ENCODE measurements at regions of chr16 and their contacts with region 1.

Region 1: DNA sequence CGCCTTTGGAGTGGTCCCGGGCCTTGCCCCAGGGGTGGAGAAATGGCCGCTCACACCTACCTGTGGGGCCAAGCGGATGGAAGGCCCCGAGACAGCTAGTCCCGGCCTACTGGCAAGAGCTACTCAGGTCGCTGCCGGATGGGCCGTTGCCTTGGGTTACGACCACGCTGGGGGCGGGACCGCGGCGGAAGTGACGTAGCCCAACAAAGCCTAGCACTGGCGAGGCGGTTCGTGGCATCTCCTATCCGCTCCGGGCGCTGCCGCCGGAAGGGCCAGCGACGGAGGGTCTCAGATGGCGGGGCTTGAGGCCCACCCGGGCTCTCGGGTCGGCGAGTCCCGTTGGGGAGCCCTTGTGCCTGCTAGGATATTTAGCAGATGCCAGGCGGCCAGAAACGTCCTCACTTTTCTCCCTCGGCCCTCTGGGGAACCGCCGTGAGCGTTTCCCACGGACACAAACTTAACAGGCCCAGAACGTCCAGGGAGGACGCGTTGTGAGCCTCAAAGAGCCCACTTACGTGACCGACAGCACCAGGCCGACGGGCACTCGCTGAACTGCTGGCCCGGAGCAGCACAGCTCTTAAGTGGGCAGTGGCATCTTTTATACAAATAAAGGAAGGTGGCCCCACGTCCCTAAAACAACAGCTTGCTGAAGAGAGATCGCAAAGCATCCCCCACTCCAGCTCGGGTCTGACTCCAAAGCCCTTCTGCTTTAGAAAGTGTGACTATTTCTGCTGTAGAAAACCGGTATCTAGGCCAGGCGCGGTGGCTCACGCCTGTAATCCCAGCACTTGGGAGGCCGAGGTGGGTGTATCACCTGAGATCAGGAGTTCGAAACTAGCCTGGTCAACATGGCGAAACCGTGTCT is at the start of gene C16orf46:
- DNase-seq: peak; percentile 93 to 99 (median 97)
- ATAC-seq: peak; percentile 85
- H3K4me3 ChIP-seq: peak within 1 kb of the TSS; percentile 96
- H3K4me3 Mint-ChIP-seq: peak within 1 kb of the TSS in 2 of 10 donors; percentile 39 to 57
- H3K27ac ChIP-seq: peak within 1 kb of the TSS; percentile 89
- H3K27ac Mint-ChIP-seq: peak within 1 kb of the TSS in 2 of 9 donors; percentile 89 to 91
- H3K4me1 ChIP-seq: peaks cover 10 to 11% of the 10 kb centered on the region in 2 donors
- H3K4me1 Mint-ChIP-seq: peaks cover 0 to 4% (median 0%) of the 10 kb centered on the region in 7 donors
- H3K27me3 ChIP-seq: no peaks in the 10 kb centered on the region
- H3K27me3 Mint-ChIP-seq: peaks cover 0 to 10% (median 0%) of the 10 kb centered on the region in 5 donors
- total RNA-seq, gene C16orf46: 0.24 to 2.1 (median 0.70) TPM in 4 of 5 experiments, not detected in the other

Region 2: GRCh38 chr16:80540516-80541272 is 536.6 kb before region 1 on chr16 and contains the start of gene DYNLRB2:
- CTCF ChIA-PET with region 1: no interaction called
- POLR2A ChIA-PET with region 1: no interaction called
- intact Hi-C with region 1: loop called (anchors 2 to 5 kb)
- DNase-seq: peak; percentile 82 to 94 (median 93)
- ATAC-seq: peak; percentile 94
- H3K4me3 ChIP-seq: peak within 1 kb of the TSS; percentile 94
- H3K4me3 Mint-ChIP-seq: peak within 1 kb of the TSS; percentile 93 to 98 (median 96)
- H3K27ac ChIP-seq: peak within 1 kb of the TSS; percentile 77
- H3K27ac Mint-ChIP-seq: peak within 1 kb of the TSS; percentile 96 to 99 (median 97)
- H3K4me1 ChIP-seq: peaks cover 6 to 13% of the 10 kb centered on the region in 2 donors
- H3K4me1 Mint-ChIP-seq: peaks cover 16 to 33% (median 19%) of the 10 kb centered on the region in 7 donors
- H3K27me3 ChIP-seq: no peaks in the 10 kb centered on the region
- H3K27me3 Mint-ChIP-seq: peaks cover 0 to 9% (median 3%) of the 10 kb centered on the region in 5 donors
- total RNA-seq, gene DYNLRB2: 0.92 to 1.2 TPM in 2 of 5 experiments, not detected in the others

Region 3: DNA sequence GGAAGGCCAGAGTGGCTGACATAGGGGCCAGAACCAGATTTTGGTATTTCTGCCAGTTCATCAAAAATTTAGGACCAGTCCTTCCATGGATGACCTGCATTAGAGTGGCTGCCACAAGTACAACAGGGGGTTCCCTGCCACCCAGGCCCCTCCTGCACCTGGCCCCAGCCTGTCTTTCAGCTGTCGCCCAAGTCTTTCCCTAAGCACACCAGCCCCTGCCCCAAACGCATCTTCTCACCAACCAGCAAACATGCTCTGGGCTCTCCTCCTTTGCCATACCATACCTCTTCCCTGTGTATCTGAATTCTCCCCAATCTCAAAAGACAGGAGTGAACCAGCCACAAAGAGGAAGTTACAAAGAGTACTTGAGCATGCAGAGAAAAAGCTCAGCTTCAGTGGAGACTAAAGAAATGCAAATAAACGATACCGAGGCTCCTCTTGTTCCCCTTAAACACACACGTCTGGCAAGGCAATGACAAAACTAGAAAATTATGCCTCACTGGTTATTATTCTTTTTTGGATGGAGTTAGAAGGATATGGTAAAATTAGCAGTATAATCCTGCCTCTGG is 405.9 kb before region 1 on chr16:
- CTCF ChIA-PET with region 1: no interaction called
- POLR2A ChIA-PET with region 1: no interaction called
- intact Hi-C with region 1: no loop called
- DNase-seq: no peak
- ATAC-seq: no peak
- H3K4me3 ChIP-seq: no peak overlapping the region
- H3K4me3 Mint-ChIP-seq: no peak overlapping the region
- H3K27ac ChIP-seq: no peak overlapping the region
- H3K27ac Mint-ChIP-seq: peak overlapping the region in 2 of 9 donors; percentile 36 to 38
- H3K4me1 ChIP-seq: no peaks in the 10 kb centered on the region
- H3K4me1 Mint-ChIP-seq: peaks cover 5 to 26% (median 11%) of the 10 kb centered on the region in 7 donors
- H3K27me3 ChIP-seq: no peaks in the 10 kb centered on the region
- H3K27me3 Mint-ChIP-seq: peaks cover 0 to 3% (median 0%) of the 10 kb centered on the region in 5 donors

Region 4: GRCh38 chr16:80997139-80997798 is 80.0 kb before region 1 on chr16:
- CTCF ChIA-PET with region 1: interaction called, 5 read pairs
- POLR2A ChIA-PET with region 1: interaction called, 3 read pairs
- intact Hi-C with region 1: loop called in 1 of 2 experiments (anchors 2 kb)
- DNase-seq: peak in 4 of 9 donors; percentile 21 to 33 (median 27)
- ATAC-seq: peak; percentile 49
- H3K4me3 ChIP-seq: peak overlapping the region; percentile 58
- H3K4me3 Mint-ChIP-seq: peak overlapping the region; percentile 79 to 97 (median 94)
- H3K27ac ChIP-seq: peak overlapping the region; percentile 71
- H3K27ac Mint-ChIP-seq: peak overlapping the region; percentile 92 to 96 (median 95)
- H3K4me1 ChIP-seq: peaks cover 4% of the 10 kb centered on the region in 2 donors
- H3K4me1 Mint-ChIP-seq: peaks cover 24 to 79% (median 67%) of the 10 kb centered on the region in 7 donors
- H3K27me3 ChIP-seq: no peaks in the 10 kb centered on the region
- H3K27me3 Mint-ChIP-seq: no peaks in the 10 kb centered on the region

Region 5: GRCh38 chr16:81095953-81096717 is 18.8 kb after region 1 on chr16 and contains the start of gene GCSH:
- CTCF ChIA-PET with region 1: interaction called, 3 read pairs
- POLR2A ChIA-PET with region 1: interaction called, 9 read pairs
- intact Hi-C with region 1: loop called (anchors 1 kb)
- DNase-seq: peak; percentile 94 to 99 (median 98)
- ATAC-seq: peak; percentile 98
- H3K4me3 ChIP-seq: peak within 1 kb of the TSS; percentile 71
- H3K4me3 Mint-ChIP-seq: peak within 1 kb of the TSS; percentile 72 to 93 (median 82)
- H3K27ac ChIP-seq: peak within 1 kb of the TSS; percentile 67
- H3K27ac Mint-ChIP-seq: peak within 1 kb of the TSS; percentile 45 to 87 (median 71)
- H3K4me1 ChIP-seq: peaks cover 0 to 6% of the 10 kb centered on the region in 2 donors
- H3K4me1 Mint-ChIP-seq: peaks cover 3 to 19% (median 9%) of the 10 kb centered on the region in 7 donors
- H3K27me3 ChIP-seq: no peaks in the 10 kb centered on the region
- H3K27me3 Mint-ChIP-seq: no peaks in the 10 kb centered on the region
- total RNA-seq, gene GCSH: 1.5 to 7.5 (median 4.9) TPM

Region 6: DNA sequence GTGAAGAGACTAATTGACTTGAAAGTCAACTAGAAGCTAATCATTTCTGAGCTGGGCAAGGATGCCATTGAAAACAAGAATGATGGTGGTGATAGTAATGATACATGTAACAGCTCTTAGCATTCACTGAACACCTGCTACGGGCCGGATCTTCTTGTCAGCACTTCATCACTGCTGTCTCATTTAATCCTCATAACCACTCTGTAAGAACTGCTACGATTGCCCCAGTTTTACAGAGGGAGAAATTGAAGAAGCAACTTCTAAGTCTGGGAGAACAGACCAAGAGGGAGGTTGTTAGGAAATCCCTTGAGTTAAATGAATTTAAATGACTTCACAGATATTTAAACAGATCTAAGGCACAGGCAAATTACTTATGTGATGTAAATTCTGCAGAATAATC is 230.5 kb after region 1 on chr16:
- CTCF ChIA-PET with region 1: no interaction called
- POLR2A ChIA-PET with region 1: no interaction called
- intact Hi-C with region 1: no loop called
- DNase-seq: no peak
- ATAC-seq: no peak
- H3K4me3 ChIP-seq: no peak overlapping the region
- H3K4me3 Mint-ChIP-seq: no peak overlapping the region
- H3K27ac ChIP-seq: no peak overlapping the region
- H3K27ac Mint-ChIP-seq: peak overlapping the region in 2 of 9 donors; percentile 12 to 16
- H3K4me1 ChIP-seq: no peaks in the 10 kb centered on the region
- H3K4me1 Mint-ChIP-seq: peaks cover 7 to 29% (median 23%) of the 10 kb centered on the region in 7 donors
- H3K27me3 ChIP-seq: no peaks in the 10 kb centered on the region
- H3K27me3 Mint-ChIP-seq: peaks cover 0 to 3% (median 0%) of the 10 kb centered on the region in 5 donors

Region 7: GRCh38 chr16:81737885-81738786 is 660.8 kb after region 1 on chr16:
- CTCF ChIA-PET with region 1: no interaction called
- POLR2A ChIA-PET with region 1: no interaction called
- intact Hi-C with region 1: loop called in 1 of 2 experiments (anchors 1 kb)
- DNase-seq: peak; percentile 69 to 88 (median 83)
- ATAC-seq: peak; percentile 95
- H3K4me3 ChIP-seq: peak overlapping the region; percentile 28
- H3K4me3 Mint-ChIP-seq: peak overlapping the region; percentile 67 to 81 (median 76)
- H3K27ac ChIP-seq: no peak overlapping the region
- H3K27ac Mint-ChIP-seq: peak overlapping the region in 6 of 9 donors; percentile 34 to 75 (median 42)
- H3K4me1 ChIP-seq: peaks cover 0 to 3% of the 10 kb centered on the region in 2 donors
- H3K4me1 Mint-ChIP-seq: peaks cover 0 to 18% (median 5%) of the 10 kb centered on the region in 7 donors
- H3K27me3 ChIP-seq: no peaks in the 10 kb centered on the region
- H3K27me3 Mint-ChIP-seq: peaks cover 0 to 2% (median 0%) of the 10 kb centered on the region in 5 donors

Region 8: GRCh38 chr16:82169861-82170845 is 1092.8 kb after region 1 on chr16 and contains the start of gene MPHOSPH6:
- CTCF ChIA-PET with region 1: no interaction called
- POLR2A ChIA-PET with region 1: no interaction called
- intact Hi-C with region 1: loop called in 1 of 2 experiments (anchors 2 kb)
- DNase-seq: peak; percentile 84 to 91 (median 88)
- ATAC-seq: peak; percentile 98
- H3K4me3 ChIP-seq: peak within 1 kb of the TSS; percentile 77
- H3K4me3 Mint-ChIP-seq: peak within 1 kb of the TSS; percentile 80 to 97 (median 95)
- H3K27ac ChIP-seq: peak within 1 kb of the TSS; percentile 84
- H3K27ac Mint-ChIP-seq: peak within 1 kb of the TSS; percentile 78 to 98 (median 96)
- H3K4me1 ChIP-seq: peaks cover 9 to 12% of the 10 kb centered on the region in 2 donors
- H3K4me1 Mint-ChIP-seq: peaks cover 18 to 38% (median 32%) of the 10 kb centered on the region in 7 donors
- H3K27me3 ChIP-seq: peaks cover 6% of the 10 kb centered on the region in 2 donors
- H3K27me3 Mint-ChIP-seq: peaks cover 8 to 41% (median 28%) of the 10 kb centered on the region in 5 donors
- total RNA-seq, gene MPHOSPH6: 15.6 to 30.4 (median 23.3) TPM

Measured in naive thymus-derived CD4-positive, alpha-beta T cell (primary cell).